ENCODE measurements at regions of chr20 and their contacts with region 1.

Region 1: GRCh38 chr20:59850018-59850641 is 83.3 kb downstream of the SYCP2 start:
- DNase-seq: no peak
- ATAC-seq: no peak
- H3K4me3 ChIP-seq: no peak overlapping the region
- H3K27ac ChIP-seq: no peak overlapping the region
- H3K4me1 ChIP-seq: no peaks in the 10 kb centered on the region
- H3K27me3 ChIP-seq: no peaks in the 10 kb centered on the region
- CTCF ChIP-seq: peak; percentile 65

Region 2: DNA sequence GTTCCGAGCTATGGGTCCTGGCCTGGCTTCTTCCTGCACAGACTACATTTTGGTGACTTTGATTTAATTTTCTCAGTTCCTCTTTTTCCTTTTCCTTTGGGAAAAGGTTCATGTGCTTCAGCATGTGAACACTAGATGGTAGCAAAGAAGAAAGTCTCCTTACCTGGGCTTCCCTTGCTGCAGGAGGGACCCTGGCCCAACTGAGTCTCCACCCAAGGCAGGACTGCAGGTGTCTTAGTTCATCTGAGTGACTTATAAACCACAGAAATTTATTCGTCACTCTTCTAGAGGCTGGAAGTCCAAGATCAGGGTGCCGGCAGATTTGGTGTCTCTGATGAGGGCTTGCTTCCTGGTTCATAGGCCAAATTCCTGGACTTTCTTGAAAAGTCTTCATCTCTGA is 79.9 kb before region 1 on chr20:
- intact Hi-C with region 1: loop called in 1 of 2 experiments (anchors 10 kb)
- DNase-seq: no peak
- ATAC-seq: no peak
- H3K4me3 ChIP-seq: no peak overlapping the region
- H3K27ac ChIP-seq: no peak overlapping the region
- H3K4me1 ChIP-seq: no peaks in the 10 kb centered on the region
- H3K27me3 ChIP-seq: no peaks in the 10 kb centered on the region
- CTCF ChIP-seq: no peak